ENCODE measurements at regions of chr3 and their contacts with region 1.

Region 1: DNA sequence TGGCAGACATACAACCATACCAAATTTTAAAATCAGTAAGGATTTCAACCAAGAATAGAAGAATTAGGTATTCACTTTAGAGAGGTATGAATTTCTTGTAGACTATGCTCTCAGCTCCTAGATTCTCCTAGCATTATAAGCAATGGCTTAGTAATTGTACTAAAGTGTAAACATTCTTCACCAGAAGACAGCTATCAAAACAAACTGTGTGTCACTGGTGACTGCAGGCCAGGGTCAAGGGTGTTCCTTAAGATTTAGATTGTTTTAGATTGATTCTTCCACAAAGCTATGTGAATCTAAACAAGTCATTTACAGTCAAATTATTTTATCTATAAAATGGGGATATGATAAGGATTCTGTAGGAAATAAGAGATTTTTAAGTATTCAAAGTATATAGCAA is 23.1 kb upstream of the GP5 start:
- DNase-seq: peak; percentile 87
- ATAC-seq: peak; percentile 91
- H3K4me3 ChIP-seq: no peak overlapping the region
- H3K27ac ChIP-seq: no peak overlapping the region
- H3K4me1 ChIP-seq: peaks cover 8% of the 10 kb centered on the region
- H3K27me3 ChIP-seq: no peaks in the 10 kb centered on the region
- CTCF ChIP-seq: no peak
- POLR2A ChIP-seq: no peak
- RAD21 ChIP-seq: no peak

Region 2: GRCh38 chr3:194439881-194440550 is 17.8 kb after region 1 on chr3:
- CTCF ChIA-PET with region 1: interaction called, 7 read pairs
- POLR2A ChIA-PET with region 1: no interaction called
- dilution Hi-C with region 1: no loop called
- in situ Hi-C with region 1: no loop called
- intact Hi-C with region 1: loop called (anchors 2 kb)
- DNase-seq: no peak
- ATAC-seq: peak; percentile 70
- H3K4me3 ChIP-seq: no peak overlapping the region
- H3K27ac ChIP-seq: peak overlapping the region; percentile 56; the same call in 1 of the 2 replicates
- H3K4me1 ChIP-seq: peaks cover 7% of the 10 kb centered on the region
- H3K27me3 ChIP-seq: no peaks in the 10 kb centered on the region
- CTCF ChIP-seq: no peak
- POLR2A ChIP-seq: no peak
- RAD21 ChIP-seq: no peak

Region 3: GRCh38 chr3:194460566-194460965 is 38.4 kb after region 1 on chr3:
- CTCF ChIA-PET with region 1: no interaction called
- POLR2A ChIA-PET with region 1: no interaction called
- dilution Hi-C with region 1: no loop called
- in situ Hi-C with region 1: no loop called
- intact Hi-C with region 1: loop called (anchors 5 kb)
- DNase-seq: no peak
- ATAC-seq: no peak
- H3K4me3 ChIP-seq: no peak overlapping the region
- H3K27ac ChIP-seq: peak overlapping the region; percentile 44; the same call in 1 of the 2 replicates
- H3K4me1 ChIP-seq: peaks cover 3% of the 10 kb centered on the region; the same call in 1 of the 2 replicates
- H3K27me3 ChIP-seq: no peaks in the 10 kb centered on the region
- CTCF ChIP-seq: no peak
- POLR2A ChIP-seq: no peak
- RAD21 ChIP-seq: no peak

Measured in IMR-90 (cell line).